BJ (cell line): ENCODE measurements at regions of chr9 and their contacts with region 1.

Region 1: GRCh38 chr9:4933177-4933576 is 51.9 kb upstream of the JAK2 start:
- DNase-seq: no peak
- H3K4me3 ChIP-seq: no peak overlapping the region
- H3K27me3 ChIP-seq: no peaks in the 10 kb centered on the region
- CTCF ChIP-seq: no peak

Region 2: DNA sequence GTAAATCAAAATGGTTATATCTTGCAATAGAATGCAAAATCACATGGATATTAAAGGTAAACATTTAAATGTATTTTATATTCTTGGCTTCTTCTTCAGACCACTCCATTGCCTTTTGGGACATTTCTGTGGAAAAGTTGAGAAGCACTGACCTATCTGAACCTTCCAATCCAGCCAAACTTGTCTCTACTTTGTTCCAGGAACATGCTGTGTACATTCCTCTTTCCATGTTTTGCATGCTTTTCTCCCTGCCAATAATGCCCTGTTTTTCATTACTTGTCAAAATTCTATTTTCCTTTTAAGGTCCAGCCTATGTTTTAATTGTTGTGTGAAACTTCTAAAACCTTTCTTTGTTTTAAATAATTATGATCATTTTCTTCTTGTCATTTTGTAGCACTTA is 80.2 kb after region 1 on chr9:
- CTCF ChIA-PET with region 1: no interaction called
- POLR2A ChIA-PET with region 1: no interaction called
- DNase-seq: no peak
- H3K4me3 ChIP-seq: no peak overlapping the region
- H3K27me3 ChIP-seq: no peaks in the 10 kb centered on the region
- CTCF ChIP-seq: no peak

Region 3: GRCh38 chr9:6412487-6413364 is 1479.5 kb after region 1 on chr9 and contains the start of gene UHRF2:
- CTCF ChIA-PET with region 1: no interaction called
- POLR2A ChIA-PET with region 1: interaction called, 31 read pairs
- DNase-seq: peak; percentile 87
- H3K4me3 ChIP-seq: peak within 1 kb of the TSS; percentile 75
- H3K27me3 ChIP-seq: peaks cover 2% of the 10 kb centered on the region; the same call in 1 of the 2 replicates
- CTCF ChIP-seq: no peak
- polyA plus RNA-seq, gene UHRF2: 31.1 and 49.8 TPM in 2 replicates